ENCODE measurements at regions of chr2 and their contacts with region 1.

Region 1: DNA sequence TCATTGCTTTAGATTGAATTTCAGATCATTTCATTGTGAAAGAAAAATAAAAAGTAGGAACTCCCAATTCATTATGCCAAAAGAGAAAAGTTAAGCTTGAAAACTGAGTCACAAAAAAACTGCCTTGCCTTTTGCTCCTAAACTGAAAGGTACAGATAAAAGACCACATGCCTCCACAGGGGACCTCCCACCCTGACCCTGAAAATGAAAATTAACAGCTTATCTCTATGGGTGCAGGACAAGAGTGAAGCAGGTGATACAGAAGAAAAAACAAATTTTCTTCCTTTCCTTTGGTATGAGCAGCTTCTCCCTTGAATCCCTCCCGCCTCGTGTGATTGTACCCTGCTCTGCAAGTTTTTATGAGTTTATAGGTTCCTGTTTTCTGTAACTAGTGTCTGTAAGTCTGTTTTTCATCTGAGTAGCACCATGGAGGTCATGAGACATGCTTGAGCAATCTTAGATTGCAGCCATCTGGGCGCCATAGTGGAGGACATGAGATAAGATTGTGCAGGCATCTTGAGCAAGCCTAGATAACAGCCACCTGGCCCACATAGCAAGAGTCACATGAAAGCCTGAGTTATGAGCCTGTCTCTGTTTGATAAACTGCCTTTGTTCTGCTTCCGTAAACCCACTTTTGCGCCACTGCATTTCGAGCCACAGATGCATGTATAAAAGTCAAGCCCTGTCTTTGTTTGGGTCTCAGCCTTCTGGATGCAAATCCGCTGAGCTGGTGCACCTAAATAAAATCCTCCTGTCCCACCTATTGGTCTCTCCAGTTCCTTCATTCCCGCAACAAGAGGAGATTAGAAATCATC is 56.2 kb upstream of the DYNC1I2 start:
- DNase-seq: no peak

Region 2: DNA sequence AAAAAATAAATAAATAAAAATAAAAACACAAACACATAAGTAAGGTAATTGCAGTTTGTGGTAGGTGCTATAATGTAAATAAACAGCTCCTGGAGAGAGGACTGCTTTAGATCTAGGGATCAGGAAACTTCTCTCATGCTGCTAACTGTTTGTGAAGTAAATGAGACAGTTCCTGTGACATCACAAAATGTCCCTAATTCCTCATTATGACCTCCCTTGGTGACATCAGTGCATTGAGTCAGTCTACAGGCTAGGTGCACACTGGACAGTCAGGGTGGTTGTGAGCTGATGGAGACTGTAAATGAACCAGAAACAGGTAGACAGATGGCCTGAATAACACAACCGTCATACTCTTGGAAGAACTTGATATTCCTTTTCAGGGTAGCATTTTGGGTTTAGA is 847.5 kb before region 1 on chr2:
- intact Hi-C with region 1: loop called in 1 of 2 experiments (anchors 5 kb)
- DNase-seq: no peak